ENCODE measurements at regions of chr10 and their contacts with region 1.

Region 1: GRCh38 chr10:122471531-122472177 is 10.3 kb downstream of the HTRA1 start:
- DNase-seq: no peak
- H3K4me3 ChIP-seq: no peak overlapping the region
- H3K27ac ChIP-seq: no peak overlapping the region
- H3K4me1 ChIP-seq: peaks cover 18 to 35% (median 22%) of the 10 kb centered on the region in 4 donors
- H3K27me3 ChIP-seq: peaks cover 6% of the 10 kb centered on the region
- CTCF ChIP-seq: no peak
- EP300 ChIP-seq: no peak
- POLR2A ChIP-seq: no peak

Region 2: GRCh38 chr10:122391875-122392274 is 79.8 kb before region 1 on chr10:
- in situ Hi-C with region 1: no loop called
- intact Hi-C with region 1: loop called (anchors 2 kb)
- DNase-seq: no peak
- H3K4me3 ChIP-seq: no peak overlapping the region
- H3K27ac ChIP-seq: no peak overlapping the region
- H3K4me1 ChIP-seq: peaks cover 0 to 30% (median 14%) of the 10 kb centered on the region in 4 donors
- H3K27me3 ChIP-seq: no peaks in the 10 kb centered on the region
- CTCF ChIP-seq: no peak
- EP300 ChIP-seq: no peak
- POLR2A ChIP-seq: no peak

Measured in transverse colon (tissue), 4 donors.